Gastrocnemius medialis (tissue), 4 donors: ENCODE measurements at regions of chr22 and their contacts with region 1.

Region 1: DNA sequence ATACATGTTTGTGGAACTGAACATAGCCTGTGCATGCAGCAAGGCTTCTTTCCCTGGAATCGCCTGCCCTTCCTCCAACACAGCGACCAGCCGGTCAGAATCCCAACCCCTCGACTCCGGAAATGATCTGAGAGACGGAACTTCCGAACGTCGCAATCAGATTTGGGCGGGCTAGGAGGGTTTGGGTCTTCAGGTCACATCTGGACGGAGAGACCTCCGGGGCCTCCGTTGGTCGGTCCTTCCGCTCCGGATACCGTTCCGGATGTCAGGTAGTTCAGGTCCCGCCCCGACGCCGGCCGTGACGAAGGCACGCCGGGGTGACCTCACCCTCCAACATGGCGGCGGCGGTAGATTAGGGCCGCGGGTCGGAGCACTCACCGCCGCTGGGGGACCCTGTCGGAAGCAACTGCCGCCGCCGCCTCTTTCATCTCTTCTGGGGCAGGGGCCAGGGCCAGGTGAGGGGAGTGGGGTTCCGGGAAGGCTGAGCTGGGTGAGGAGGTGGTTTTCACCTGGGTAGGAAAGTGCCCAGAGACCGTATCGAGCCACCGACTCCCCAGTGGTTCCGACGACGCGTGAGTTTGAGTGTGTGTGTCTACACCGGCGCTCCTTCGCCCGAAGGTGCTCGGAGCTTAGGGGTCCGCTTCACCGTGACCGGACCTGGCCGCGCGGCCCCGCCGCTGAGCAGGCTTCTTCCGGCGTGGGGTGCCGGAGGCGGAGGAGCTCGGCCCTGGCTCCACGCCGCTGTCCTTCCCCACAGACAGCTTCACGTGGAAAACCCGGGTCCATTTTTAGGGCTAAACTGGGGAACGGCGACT is at the start of gene BCL2L13:
- DNase-seq: peak; percentile 89 to 92
- ATAC-seq: peak; percentile 85 to 86
- H3K4me3 ChIP-seq: peak within 1 kb of the TSS; percentile 66 to 95 (median 83)
- H3K27ac ChIP-seq: peak within 1 kb of the TSS; percentile 92 to 100 (median 98)
- H3K4me1 ChIP-seq: peaks cover 15 to 19% of the 10 kb centered on the region in 2 donors
- H3K27me3 ChIP-seq: no peaks in the 10 kb centered on the region
- CTCF ChIP-seq: peak in 2 of 5 experiments; percentile 10 to 14
- POLR2A ChIP-seq: peak; percentile 95 to 99
- total RNA-seq, gene BCL2L13: 162 to 310 (median 231) TPM

Region 2: GRCh38 chr22:17562906-17563870 is 75.5 kb before region 1 on chr22 and contains the start of gene SLC25A18:
- in situ Hi-C with region 1: no loop called
- intact Hi-C with region 1: loop called (anchors 2 kb)
- DNase-seq: peak; percentile 88 to 91
- ATAC-seq: peak; percentile 82 to 89
- H3K4me3 ChIP-seq: peak within 1 kb of the TSS; percentile 43 to 55 (median 52)
- H3K27ac ChIP-seq: peak within 1 kb of the TSS; percentile 87 to 98 (median 96)
- H3K4me1 ChIP-seq: peaks cover 30 to 47% of the 10 kb centered on the region in 2 donors
- H3K27me3 ChIP-seq: no peaks in the 10 kb centered on the region
- CTCF ChIP-seq: peak in 3 of 5 experiments; percentile 12 to 40 (median 26)
- POLR2A ChIP-seq: peak; percentile 62 to 65
- total RNA-seq, gene SLC25A18: 9.3 to 22.2 (median 13.3) TPM

Region 3: GRCh38 chr22:17570851-17571641 is 67.6 kb before region 1 on chr22:
- in situ Hi-C with region 1: loop called in 1 of 4 experiments (anchors 10 kb)
- intact Hi-C with region 1: loop called (anchors 2 kb)
- DNase-seq: peak; percentile 92 to 95
- ATAC-seq: peak; percentile 93 to 95
- H3K4me3 ChIP-seq: peak overlapping the region; percentile 30 to 47 (median 40)
- H3K27ac ChIP-seq: peak overlapping the region; percentile 87 to 98 (median 96)
- H3K4me1 ChIP-seq: peaks cover 27 to 31% of the 10 kb centered on the region in 2 donors
- H3K27me3 ChIP-seq: no peaks in the 10 kb centered on the region
- CTCF ChIP-seq: no peak
- POLR2A ChIP-seq: peak; percentile 76 to 79

Region 4: DNA sequence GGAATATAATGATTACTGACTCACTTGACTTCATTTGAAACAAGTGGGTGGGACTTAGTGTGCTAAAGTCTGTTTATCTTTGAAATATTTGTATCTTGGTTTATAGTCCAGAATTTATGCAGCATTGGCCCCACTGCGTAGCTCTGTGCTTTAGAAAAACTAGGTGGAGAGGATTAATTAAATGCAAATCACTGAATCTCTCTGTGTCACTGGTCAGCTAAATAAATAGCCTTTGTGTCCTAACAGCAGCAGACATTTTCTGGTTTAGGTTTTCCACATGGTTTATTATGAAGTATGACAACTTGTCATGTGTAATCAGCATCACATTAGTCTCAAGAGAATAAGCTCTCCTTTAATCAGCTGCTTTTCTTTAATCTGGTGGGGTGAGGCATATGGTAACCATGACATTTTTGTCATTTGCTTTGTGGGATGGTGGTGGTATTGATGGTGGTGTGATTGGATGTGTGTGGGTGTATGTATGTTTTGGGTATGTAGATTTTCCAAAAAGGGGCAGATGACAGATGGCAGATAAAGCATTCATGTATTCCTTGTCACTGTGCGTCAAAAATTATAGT is 33.9 kb after region 1 on chr22:
- in situ Hi-C with region 1: no loop called
- intact Hi-C with region 1: loop called (anchors 2 kb)
- DNase-seq: no peak
- ATAC-seq: peak; percentile 35 to 50
- H3K4me3 ChIP-seq: no peak overlapping the region
- H3K27ac ChIP-seq: peak overlapping the region; percentile 83 to 94 (median 88)
- H3K4me1 ChIP-seq: peaks cover 13 to 36% of the 10 kb centered on the region in 2 donors
- H3K27me3 ChIP-seq: no peaks in the 10 kb centered on the region
- CTCF ChIP-seq: no peak
- POLR2A ChIP-seq: no peak

Region 5: GRCh38 chr22:17726464-17727246 is 88.0 kb after region 1 on chr22:
- in situ Hi-C with region 1: no loop called
- intact Hi-C with region 1: loop called (anchors 5 kb)
- DNase-seq: no peak
- ATAC-seq: no peak
- H3K4me3 ChIP-seq: no peak overlapping the region
- H3K27ac ChIP-seq: peak overlapping the region in 2 of 4 donors; percentile 55 to 84
- H3K4me1 ChIP-seq: peaks cover 14 to 21% of the 10 kb centered on the region in 2 donors
- H3K27me3 ChIP-seq: no peaks in the 10 kb centered on the region
- CTCF ChIP-seq: no peak
- POLR2A ChIP-seq: no peak